ENCODE measurements at regions of chr11 and their contacts with region 1.

Region 1: DNA sequence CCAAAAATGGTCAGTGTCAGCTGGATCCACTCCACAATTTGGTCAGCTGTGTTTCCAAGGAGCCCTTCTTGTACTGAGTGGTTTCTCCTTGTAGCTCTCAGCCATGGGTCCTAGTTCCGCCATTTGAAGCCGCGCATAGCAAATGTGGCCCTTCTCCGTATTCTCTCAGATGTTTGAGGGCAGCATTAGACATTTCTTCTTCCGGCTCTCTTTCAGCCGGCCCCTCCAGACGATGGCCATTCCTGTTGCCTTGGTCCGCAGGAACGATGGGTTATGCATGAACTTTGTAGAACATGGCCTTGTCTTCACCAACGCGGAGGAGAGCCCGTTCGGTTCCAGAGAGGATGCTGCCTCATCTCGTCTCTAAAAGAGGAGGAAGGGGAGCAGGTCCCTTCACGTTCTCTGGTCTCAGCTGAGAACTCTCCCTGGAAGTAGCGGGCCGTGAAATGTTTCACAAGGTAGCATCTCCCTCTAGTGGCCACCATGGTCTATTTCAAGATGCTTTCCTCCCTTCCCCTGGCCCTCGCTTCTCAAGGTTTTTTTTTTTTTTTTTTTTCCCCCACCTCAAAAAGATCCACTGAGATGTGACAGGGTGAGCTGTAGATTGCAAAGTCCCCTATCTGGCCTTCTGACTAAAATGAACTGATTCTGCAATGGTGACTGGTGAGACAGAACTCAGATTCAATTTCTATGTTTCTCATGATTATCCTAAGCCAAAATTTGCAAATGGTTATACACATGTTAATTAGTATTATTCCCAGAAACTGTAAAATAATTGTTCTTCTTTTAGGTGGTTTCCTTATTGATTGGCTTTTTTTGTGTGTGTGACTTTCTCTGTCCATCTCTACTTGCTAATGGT is 19.8 kb upstream of the PLET1 start:
- DNase-seq: peak; percentile 79
- H3K4me3 ChIP-seq: peak overlapping the region; percentile 33 to 39 (median 38)
- H3K27ac ChIP-seq: no peak overlapping the region
- H3K4me1 ChIP-seq: peaks cover 6% of the 10 kb centered on the region
- H3K27me3 ChIP-seq: peaks cover 4 to 5% of the 10 kb centered on the region in 2 experiments
- CTCF ChIP-seq: peak; percentile 71 to 79
- POLR2A ChIP-seq: no peak

Region 2: GRCh38 chr11:111652184-111652583 is 628.3 kb before region 1 on chr11:
- CTCF ChIA-PET with region 1: no interaction called
- POLR2A ChIA-PET with region 1: no interaction called
- dilution Hi-C with region 1: no loop called
- intact Hi-C with region 1: no loop called
- DNase-seq: no peak
- H3K4me3 ChIP-seq: no peak overlapping the region
- H3K27ac ChIP-seq: no peak overlapping the region
- H3K4me1 ChIP-seq: no peaks in the 10 kb centered on the region
- H3K27me3 ChIP-seq: no peaks in the 10 kb centered on the region
- CTCF ChIP-seq: no peak
- POLR2A ChIP-seq: no peak

Region 3: DNA sequence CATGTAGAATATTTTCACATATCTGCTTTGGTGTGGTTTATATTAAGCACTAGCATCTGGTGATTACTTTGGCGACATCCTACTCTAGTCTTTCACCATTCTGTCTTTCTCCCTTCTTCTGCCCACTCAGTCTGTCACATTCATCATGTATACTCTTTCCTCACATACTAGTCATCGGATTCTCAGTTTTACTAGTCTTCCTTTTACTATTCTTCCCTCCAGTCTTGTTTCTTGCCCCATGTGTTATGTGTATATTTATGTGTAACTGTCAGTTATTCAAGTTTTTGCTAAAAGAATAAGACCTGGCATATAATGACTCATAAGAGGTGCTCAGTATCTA is 347.9 kb before region 1 on chr11:
- CTCF ChIA-PET with region 1: interaction called, 4 read pairs
- POLR2A ChIA-PET with region 1: no interaction called
- dilution Hi-C with region 1: no loop called
- intact Hi-C with region 1: loop called (anchors 1 kb)
- DNase-seq: no peak
- H3K4me3 ChIP-seq: no peak overlapping the region
- H3K27ac ChIP-seq: no peak overlapping the region
- H3K4me1 ChIP-seq: peaks cover 11% of the 10 kb centered on the region
- H3K27me3 ChIP-seq: no peaks in the 10 kb centered on the region
- CTCF ChIP-seq: no peak
- POLR2A ChIP-seq: no peak

Region 4: DNA sequence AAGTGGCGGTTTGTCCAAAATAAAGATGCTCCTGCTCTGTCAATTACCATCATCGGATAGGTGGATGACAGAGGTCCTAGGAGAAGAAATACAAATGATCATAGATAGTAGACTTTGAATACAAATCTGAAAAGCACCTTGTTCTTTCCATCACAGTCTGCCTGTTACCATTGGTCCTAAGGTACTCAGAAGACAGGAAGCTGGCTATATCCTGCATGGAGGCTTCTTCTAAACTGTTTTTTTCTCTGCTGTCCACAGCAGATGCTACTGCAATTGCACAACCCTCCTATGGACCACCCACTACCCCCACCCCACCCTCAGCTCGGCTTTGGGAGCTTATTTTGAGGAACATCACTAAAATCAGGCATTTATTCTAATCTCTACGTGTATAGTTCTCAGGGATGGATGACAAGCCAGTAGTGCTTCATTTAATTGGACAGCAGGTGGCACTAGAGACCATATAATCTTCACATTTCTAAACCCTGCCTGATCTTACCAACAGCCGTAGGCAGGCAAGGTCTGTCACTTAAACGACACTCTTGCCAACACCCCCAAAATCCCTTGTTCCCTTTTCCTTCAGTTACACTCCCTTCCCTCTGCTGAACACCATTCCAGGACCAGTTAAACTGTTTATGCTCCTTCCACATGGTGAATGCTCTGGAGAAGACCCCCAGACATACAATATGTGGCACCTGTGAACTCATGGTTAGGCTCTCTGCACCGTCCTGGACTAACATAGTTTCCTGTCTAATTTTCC is 60.8 kb before region 1 on chr11:
- CTCF ChIA-PET with region 1: interaction called, 540 read pairs
- POLR2A ChIA-PET with region 1: interaction called, 6 read pairs
- dilution Hi-C with region 1: no loop called
- intact Hi-C with region 1: loop called (anchors 1 kb)
- DNase-seq: peak; percentile 80
- H3K4me3 ChIP-seq: no peak overlapping the region
- H3K27ac ChIP-seq: no peak overlapping the region
- H3K4me1 ChIP-seq: peaks cover 11% of the 10 kb centered on the region
- H3K27me3 ChIP-seq: no peaks in the 10 kb centered on the region
- CTCF ChIP-seq: peak; percentile 57 to 60
- POLR2A ChIP-seq: no peak

Region 5: GRCh38 chr11:112231952-112232351 is 48.5 kb before region 1 on chr11:
- CTCF ChIA-PET with region 1: interaction called, 34 read pairs
- POLR2A ChIA-PET with region 1: no interaction called
- dilution Hi-C with region 1: no loop called
- intact Hi-C with region 1: no loop called
- DNase-seq: no peak
- H3K4me3 ChIP-seq: no peak overlapping the region
- H3K27ac ChIP-seq: no peak overlapping the region
- H3K4me1 ChIP-seq: peaks cover 7% of the 10 kb centered on the region
- H3K27me3 ChIP-seq: no peaks in the 10 kb centered on the region
- CTCF ChIP-seq: no peak
- POLR2A ChIP-seq: no peak

Region 6: GRCh38 chr11:112310419-112310818 is 29.9 kb after region 1 on chr11:
- CTCF ChIA-PET with region 1: no interaction called
- POLR2A ChIA-PET with region 1: no interaction called
- dilution Hi-C with region 1: no loop called
- intact Hi-C with region 1: no loop called
- DNase-seq: no peak
- H3K4me3 ChIP-seq: no peak overlapping the region
- H3K27ac ChIP-seq: no peak overlapping the region
- H3K4me1 ChIP-seq: peaks cover 4% of the 10 kb centered on the region
- H3K27me3 ChIP-seq: no peaks in the 10 kb centered on the region
- CTCF ChIP-seq: no peak
- POLR2A ChIP-seq: no peak

Region 7: DNA sequence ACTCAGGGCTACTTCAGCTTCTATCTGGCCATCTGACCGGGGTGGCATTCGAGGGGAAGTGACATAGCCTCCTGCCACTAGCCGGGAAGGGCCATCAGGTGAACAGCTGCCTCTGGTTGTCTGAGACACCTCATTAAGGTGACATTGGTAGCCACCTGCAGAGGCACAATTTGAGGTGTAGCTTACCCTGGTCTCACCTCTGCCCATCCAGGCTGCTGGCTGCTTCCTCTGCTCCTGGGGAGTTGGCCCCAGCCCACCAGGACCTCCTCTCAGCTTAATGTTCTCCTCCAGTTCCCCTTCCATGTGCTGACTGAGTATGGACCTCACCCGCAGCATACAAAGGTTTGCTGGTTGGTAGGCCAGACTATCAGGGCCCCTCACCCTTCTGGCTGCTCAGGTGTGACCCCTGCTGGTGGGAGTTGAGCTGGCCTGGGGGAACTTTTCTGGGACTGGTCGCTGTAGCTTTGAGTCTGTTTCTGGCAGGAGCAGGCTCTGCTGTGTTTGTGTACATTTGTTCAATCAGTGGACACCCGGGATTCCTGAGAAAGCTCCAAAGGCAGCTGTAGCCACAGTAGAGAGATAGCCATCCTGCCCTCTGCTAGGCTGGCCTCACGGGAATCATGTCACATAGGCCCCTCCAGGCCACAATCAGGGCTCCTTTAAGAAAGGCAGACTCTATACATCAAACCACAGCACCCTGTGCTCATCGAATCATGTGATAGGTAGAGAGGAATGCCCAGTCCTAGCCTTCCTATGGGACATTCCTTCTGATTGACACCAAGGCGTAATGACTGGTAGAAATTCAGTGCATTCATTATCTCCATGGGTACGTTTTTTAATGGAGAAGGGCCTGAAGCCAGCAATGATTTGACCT is 275.2 kb after region 1 on chr11:
- CTCF ChIA-PET with region 1: interaction called, 14 read pairs
- POLR2A ChIA-PET with region 1: no interaction called
- dilution Hi-C with region 1: no loop called
- intact Hi-C with region 1: no loop called
- DNase-seq: peak; percentile 43
- H3K4me3 ChIP-seq: no peak overlapping the region
- H3K27ac ChIP-seq: no peak overlapping the region
- H3K4me1 ChIP-seq: no peaks in the 10 kb centered on the region
- H3K27me3 ChIP-seq: no peaks in the 10 kb centered on the region
- CTCF ChIP-seq: peak; percentile 69 to 86
- POLR2A ChIP-seq: no peak

Region 8: DNA sequence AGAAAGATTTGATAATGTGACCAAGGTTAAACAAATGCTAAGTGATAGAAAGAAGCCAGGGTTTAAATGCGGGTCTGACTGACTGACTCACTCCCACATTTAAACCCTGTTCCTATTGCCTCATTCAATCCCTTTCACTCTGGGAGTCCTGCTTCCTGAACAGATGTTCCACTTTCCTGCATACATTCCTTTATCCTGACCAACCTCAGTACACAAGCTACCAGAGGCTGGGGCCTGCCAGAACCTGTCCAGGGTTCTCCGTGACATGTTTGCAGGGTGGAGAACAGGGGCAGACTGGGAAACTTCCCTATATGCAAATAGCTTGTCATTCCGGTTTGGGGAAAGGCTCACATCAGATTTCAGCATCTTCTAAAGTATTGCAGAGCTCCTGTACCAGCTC is 1104.1 kb after region 1 on chr11:
- CTCF ChIA-PET with region 1: no interaction called
- POLR2A ChIA-PET with region 1: no interaction called
- dilution Hi-C with region 1: no loop called
- intact Hi-C with region 1: loop called (anchors 10 kb)
- DNase-seq: peak; percentile 94
- H3K4me3 ChIP-seq: no peak overlapping the region
- H3K27ac ChIP-seq: peak overlapping the region; percentile 70
- H3K4me1 ChIP-seq: peaks cover 24% of the 10 kb centered on the region
- H3K27me3 ChIP-seq: peaks cover 2% of the 10 kb centered on the region in 2 experiments
- CTCF ChIP-seq: no peak
- POLR2A ChIP-seq: peak; percentile 46

Measured in endothelial cell of umbilical vein (primary cell).